ENCODE measurements at regions of chr2 and their contacts with region 1.

Region 1: DNA sequence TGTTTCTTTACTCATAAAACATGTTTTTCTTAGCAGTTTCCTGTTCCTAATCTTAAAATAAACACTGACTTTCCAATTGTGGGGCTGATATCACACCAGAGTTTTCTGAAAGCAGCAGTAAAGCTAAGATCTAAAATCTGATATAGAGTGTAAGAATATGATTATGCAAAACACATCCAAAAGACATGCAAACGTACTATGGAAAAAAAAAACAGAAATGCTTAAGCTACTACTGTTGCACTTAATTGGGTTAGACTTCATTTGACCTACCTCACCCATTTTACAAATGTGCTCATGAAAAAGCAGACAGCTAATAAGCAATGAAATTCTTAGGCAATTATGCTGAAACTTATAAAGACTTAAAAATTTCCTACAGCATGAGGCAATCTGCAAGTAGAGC is 10.5 kb downstream of the CYTIP start:
- DNase-seq: no peak
- H3K4me3 ChIP-seq: no peak overlapping the region
- H3K4me3 Mint-ChIP-seq: no peak overlapping the region
- H3K27ac ChIP-seq: no peak overlapping the region
- H3K27ac Mint-ChIP-seq: peak overlapping the region in 3 of 7 donors; percentile 10 to 76 (median 35)
- H3K4me1 ChIP-seq: peaks cover 21 to 49% of the 10 kb centered on the region in 2 donors
- H3K4me1 Mint-ChIP-seq: peaks cover 53% of the 10 kb centered on the region
- H3K27me3 ChIP-seq: no peaks in the 10 kb centered on the region
- H3K27me3 Mint-ChIP-seq: no peaks in the 10 kb centered on the region
- CTCF ChIP-seq: no peak

Region 2: DNA sequence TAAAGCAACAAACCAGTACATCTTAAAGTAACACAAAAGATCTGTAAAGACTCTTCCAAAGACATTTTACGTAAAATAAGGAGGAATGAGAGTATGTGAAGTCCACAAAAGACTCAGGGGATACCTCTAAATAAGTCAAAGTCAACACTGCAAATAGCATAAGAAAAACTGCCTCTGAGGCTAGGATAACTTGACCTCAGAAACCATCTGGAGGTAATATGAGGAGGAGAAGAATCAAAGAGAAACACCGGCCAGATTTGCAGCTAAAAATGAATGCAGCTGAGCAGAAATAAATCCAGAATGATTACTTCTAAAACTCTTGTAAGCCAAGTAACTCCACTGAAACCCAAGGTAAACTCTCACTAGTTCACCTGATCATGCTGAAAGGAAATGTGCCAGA is 55.5 kb before region 1 on chr2:
- intact Hi-C with region 1: no loop called
- DNase-seq: no peak
- H3K4me3 ChIP-seq: no peak overlapping the region
- H3K4me3 Mint-ChIP-seq: no peak overlapping the region
- H3K27ac ChIP-seq: no peak overlapping the region
- H3K27ac Mint-ChIP-seq: no peak overlapping the region
- H3K4me1 ChIP-seq: peaks cover 0 to 4% of the 10 kb centered on the region in 2 donors
- H3K4me1 Mint-ChIP-seq: peaks cover 8% of the 10 kb centered on the region
- H3K27me3 ChIP-seq: no peaks in the 10 kb centered on the region
- H3K27me3 Mint-ChIP-seq: no peaks in the 10 kb centered on the region
- CTCF ChIP-seq: no peak

Region 3: DNA sequence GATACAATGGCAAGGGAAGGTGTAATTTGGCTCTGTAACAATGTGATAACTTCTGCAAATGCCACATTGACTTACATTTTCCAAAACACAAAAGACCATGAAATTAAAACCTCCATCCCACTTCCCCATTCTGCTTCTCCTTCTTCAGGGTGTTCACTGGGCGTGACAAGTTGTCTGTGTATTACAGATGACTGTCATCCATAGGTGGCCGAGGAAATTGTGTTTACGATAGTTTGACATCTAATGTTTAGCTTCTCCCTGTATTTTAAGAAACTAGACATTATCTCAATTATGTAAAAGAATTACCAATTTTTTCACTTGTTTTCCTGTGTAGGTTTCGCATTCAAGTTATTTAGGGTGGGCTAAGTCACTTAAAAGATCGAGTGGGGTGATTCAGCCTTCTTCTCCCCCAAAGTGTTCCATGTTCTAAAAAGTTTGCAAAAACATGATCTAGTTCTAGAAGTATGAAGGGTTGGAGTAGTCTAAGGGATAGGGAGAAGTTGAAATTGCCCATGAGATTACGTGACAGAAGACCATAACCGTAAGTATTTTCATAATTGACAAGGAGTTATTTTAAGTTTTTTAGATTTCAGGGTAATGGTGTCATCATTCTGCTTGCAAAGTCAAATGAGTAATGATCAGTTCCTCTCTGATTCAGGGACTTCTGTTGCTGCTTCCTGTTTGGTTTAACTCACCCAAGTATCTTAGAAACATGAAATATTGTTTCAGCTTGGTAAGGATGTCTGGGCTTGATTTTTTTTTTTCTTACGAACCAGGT is 35.7 kb after region 1 on chr2:
- intact Hi-C with region 1: loop called in 1 of 2 experiments (anchors 5 kb)
- DNase-seq: peak; percentile 92 to 97 (median 93)
- H3K4me3 ChIP-seq: peak overlapping the region; percentile 38 to 62 (median 43)
- H3K4me3 Mint-ChIP-seq: peak overlapping the region; percentile 37 to 87
- H3K27ac ChIP-seq: peak overlapping the region; percentile 83 to 100
- H3K27ac Mint-ChIP-seq: peak overlapping the region; percentile 98 to 100 (median 99)
- H3K4me1 ChIP-seq: peaks cover 37 to 59% of the 10 kb centered on the region in 2 donors
- H3K4me1 Mint-ChIP-seq: peaks cover 51% of the 10 kb centered on the region
- H3K27me3 ChIP-seq: no peaks in the 10 kb centered on the region
- H3K27me3 Mint-ChIP-seq: no peaks in the 10 kb centered on the region
- CTCF ChIP-seq: no peak

Measured in CD14-positive monocyte (primary cell).